CD8-positive, alpha-beta T cell (primary cell): ENCODE measurements at regions of chr11 and their contacts with region 1.

Region 1: DNA sequence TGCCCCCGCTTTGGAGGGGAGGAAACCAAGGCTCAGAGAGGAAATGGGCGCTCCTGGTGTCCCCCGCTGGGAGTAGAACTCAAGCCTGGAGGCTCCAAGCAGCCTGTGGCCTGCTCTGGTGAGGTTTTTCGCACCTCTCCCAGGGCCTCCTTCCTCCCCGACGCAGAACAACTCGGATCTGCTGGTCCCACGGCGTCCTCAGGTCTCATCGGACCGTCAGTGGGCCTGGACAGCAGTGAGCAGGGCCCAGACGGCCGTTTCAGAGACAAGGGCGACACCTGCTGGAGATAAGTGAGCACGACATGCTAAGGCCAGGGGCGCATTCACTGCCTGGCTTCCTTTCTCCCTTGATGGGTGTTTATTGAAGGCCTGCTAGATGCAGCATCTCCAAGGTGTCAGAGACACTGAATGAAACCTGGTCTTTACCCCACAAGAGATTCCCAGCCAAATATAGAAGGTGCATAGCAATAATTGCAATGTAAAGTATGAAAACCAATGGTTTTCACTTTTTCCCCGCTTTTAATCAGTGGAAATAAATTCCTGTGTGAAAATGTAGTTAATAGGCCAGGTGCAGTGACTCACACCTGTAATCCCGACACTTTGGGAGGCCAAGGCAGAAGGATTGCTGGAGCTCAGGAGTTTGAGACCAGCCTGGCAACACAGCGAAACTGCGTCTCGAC is 26.9 kb upstream of the CD82 start:
- DNase-seq: peak; percentile 49 to 81 (median 70)
- ATAC-seq: peak; percentile 80
- H3K4me3 ChIP-seq: no peak overlapping the region
- H3K4me3 Mint-ChIP-seq: no peak overlapping the region
- H3K27ac ChIP-seq: no peak overlapping the region
- H3K27ac Mint-ChIP-seq: no peak overlapping the region
- H3K4me1 ChIP-seq: no peaks in the 10 kb centered on the region
- H3K4me1 Mint-ChIP-seq: no peaks in the 10 kb centered on the region
- H3K27me3 ChIP-seq: no peaks in the 10 kb centered on the region
- H3K27me3 Mint-ChIP-seq: peaks cover 2% of the 10 kb centered on the region
- CTCF ChIP-seq: peak; percentile 99

Region 2: DNA sequence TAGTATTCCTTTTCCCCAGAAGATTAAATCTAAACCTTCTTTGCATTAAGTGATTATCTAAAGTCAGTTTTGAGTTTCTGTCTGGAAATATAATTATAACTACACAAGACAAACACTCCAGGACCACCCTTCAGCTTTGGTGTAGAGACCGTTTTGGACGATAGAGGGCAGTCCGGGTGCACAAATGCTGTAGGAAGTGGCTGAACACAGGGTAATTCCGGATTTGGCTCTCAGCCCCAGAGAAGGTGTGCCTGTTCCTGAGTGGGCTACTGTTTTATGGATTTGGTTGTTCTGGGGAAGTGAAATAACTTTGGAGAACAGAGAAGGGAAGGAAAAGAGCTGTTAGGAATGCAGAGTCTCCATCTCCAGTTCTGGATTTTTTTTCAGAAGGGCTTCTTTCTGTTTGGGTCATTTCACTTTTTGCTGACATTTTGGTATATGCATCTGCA is 428.3 kb before region 1 on chr11:
- CTCF ChIA-PET with region 1: interaction called, 3 read pairs
- POLR2A ChIA-PET with region 1: no interaction called
- intact Hi-C with region 1: loop called in 1 of 2 experiments (anchors 5 kb)
- DNase-seq: peak; percentile 25 to 73 (median 54)
- ATAC-seq: peak; percentile 94
- H3K4me3 ChIP-seq: no peak overlapping the region
- H3K4me3 Mint-ChIP-seq: no peak overlapping the region
- H3K27ac ChIP-seq: no peak overlapping the region
- H3K27ac Mint-ChIP-seq: no peak overlapping the region
- H3K4me1 ChIP-seq: peaks cover 5% of the 10 kb centered on the region
- H3K4me1 Mint-ChIP-seq: peaks cover 8% of the 10 kb centered on the region
- H3K27me3 ChIP-seq: no peaks in the 10 kb centered on the region
- H3K27me3 Mint-ChIP-seq: no peaks in the 10 kb centered on the region
- CTCF ChIP-seq: peak; percentile 81

Region 3: DNA sequence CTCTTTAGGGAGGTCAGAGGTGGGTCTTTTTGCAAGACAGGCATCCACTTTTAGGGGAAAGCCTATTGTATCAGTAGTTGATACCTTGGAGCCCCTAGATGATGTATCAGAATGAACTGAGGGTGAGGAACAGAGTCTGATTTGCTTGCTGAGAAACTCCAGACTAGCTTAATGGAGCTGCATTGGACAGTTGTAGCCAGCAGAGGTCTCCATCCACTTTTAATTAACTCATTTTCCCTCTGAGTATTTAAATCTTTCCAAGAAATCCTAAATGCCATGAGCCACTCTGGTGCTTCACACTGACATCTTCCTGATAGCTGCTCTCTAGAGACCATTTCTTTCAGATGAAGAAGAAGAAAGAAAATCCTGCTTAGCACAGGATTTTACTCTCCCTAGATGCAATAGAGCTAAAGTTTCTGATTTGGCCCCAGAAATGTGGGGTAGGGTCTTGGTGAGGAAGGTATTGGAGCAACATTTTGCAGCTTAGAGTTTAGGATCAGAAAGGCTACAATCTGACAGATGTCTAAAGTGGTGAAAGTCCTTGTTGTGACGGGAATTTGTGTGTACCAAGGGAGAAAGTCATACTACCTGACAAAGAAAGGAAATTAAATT is 405.1 kb before region 1 on chr11:
- CTCF ChIA-PET with region 1: no interaction called
- POLR2A ChIA-PET with region 1: no interaction called
- intact Hi-C with region 1: loop called in 1 of 2 experiments (anchors 2 kb)
- DNase-seq: no peak
- ATAC-seq: no peak
- H3K4me3 ChIP-seq: no peak overlapping the region
- H3K4me3 Mint-ChIP-seq: no peak overlapping the region
- H3K27ac ChIP-seq: no peak overlapping the region
- H3K27ac Mint-ChIP-seq: no peak overlapping the region
- H3K4me1 ChIP-seq: no peaks in the 10 kb centered on the region
- H3K4me1 Mint-ChIP-seq: no peaks in the 10 kb centered on the region
- H3K27me3 ChIP-seq: no peaks in the 10 kb centered on the region
- H3K27me3 Mint-ChIP-seq: no peaks in the 10 kb centered on the region
- CTCF ChIP-seq: no peak

Region 4: DNA sequence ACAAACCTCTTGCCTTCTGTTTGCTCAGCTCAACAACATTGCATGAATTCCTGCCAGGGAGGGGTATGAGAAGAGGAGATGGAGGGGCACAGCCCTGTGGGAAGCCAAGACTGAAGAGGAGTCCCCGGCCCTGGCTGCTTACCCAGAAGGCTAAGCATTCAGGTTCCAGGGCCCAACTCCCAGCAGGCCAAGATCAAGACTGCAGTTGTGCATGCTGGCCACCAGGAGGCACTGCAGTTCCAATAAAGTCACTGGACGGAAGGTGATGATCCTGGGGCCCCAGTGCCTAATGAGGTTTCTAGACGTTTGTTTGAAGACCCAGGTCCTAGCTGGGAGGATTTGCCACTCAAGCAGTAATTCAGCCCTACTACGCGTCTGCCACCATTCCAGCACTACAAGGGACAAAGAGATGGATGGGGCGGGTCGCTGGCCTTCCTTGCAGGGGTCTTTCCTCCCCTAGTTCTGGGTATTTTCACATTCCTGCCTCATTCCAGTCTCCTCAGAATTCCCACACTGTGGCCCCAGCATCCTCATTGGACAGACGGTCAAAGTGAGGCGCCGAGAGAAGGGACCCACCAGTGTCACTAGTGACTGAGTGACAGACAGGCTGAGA is 252.1 kb before region 1 on chr11:
- CTCF ChIA-PET with region 1: interaction called, 24 read pairs
- POLR2A ChIA-PET with region 1: no interaction called
- intact Hi-C with region 1: loop called in 1 of 2 experiments (anchors 1 kb)
- DNase-seq: peak; percentile 8 to 65 (median 52)
- ATAC-seq: peak; percentile 52
- H3K4me3 ChIP-seq: no peak overlapping the region
- H3K4me3 Mint-ChIP-seq: no peak overlapping the region
- H3K27ac ChIP-seq: no peak overlapping the region
- H3K27ac Mint-ChIP-seq: no peak overlapping the region
- H3K4me1 ChIP-seq: no peaks in the 10 kb centered on the region
- H3K4me1 Mint-ChIP-seq: no peaks in the 10 kb centered on the region
- H3K27me3 ChIP-seq: no peaks in the 10 kb centered on the region
- H3K27me3 Mint-ChIP-seq: no peaks in the 10 kb centered on the region
- CTCF ChIP-seq: peak; percentile 93

Region 5: DNA sequence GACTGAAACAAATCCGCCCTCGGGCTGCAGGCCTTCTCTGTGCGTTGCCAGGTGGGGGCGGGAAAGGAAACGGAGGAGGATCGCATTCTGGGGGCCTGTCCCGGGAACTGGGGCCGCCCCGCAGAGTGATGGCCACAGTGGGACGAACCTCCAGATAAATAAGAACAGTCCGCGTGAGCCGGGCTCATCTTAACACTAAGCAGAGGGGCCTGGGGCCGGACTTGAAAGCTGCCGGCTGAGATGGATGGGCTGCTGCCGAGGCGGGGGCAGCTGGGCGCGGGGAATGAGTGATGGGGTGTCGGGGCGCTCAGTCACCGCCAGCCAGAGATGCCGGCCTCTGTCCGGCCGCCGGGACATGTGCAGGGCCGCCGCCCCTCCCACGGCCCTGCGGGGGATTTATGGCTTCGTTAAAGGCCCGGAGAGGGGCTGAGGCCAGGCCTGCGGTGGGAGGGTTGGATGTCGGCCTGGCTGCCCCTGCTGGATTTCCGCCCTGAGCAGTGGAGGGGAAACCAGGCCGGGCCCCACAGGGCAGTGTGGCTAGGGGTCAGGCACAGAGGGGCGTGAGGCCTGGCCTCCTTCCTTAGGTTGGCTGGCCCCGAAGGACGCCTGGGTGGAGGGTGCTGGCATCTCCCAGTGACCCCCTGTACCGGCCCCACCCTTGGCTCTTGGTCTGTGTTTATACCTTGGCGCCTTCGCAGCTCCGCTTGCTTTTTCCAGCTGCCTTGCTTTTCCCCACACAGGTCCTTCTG is 18.4 kb before region 1 on chr11:
- CTCF ChIA-PET with region 1: interaction called, 14 read pairs
- POLR2A ChIA-PET with region 1: no interaction called
- intact Hi-C with region 1: no loop called
- DNase-seq: no peak
- ATAC-seq: no peak
- H3K4me3 ChIP-seq: no peak overlapping the region
- H3K4me3 Mint-ChIP-seq: no peak overlapping the region
- H3K27ac ChIP-seq: no peak overlapping the region
- H3K27ac Mint-ChIP-seq: no peak overlapping the region
- H3K4me1 ChIP-seq: no peaks in the 10 kb centered on the region
- H3K4me1 Mint-ChIP-seq: peaks cover 2% of the 10 kb centered on the region
- H3K27me3 ChIP-seq: no peaks in the 10 kb centered on the region
- H3K27me3 Mint-ChIP-seq: peaks cover 34% of the 10 kb centered on the region
- CTCF ChIP-seq: no peak

Region 6: GRCh38 chr11:44623731-44624491 is 85.4 kb after region 1 on chr11:
- CTCF ChIA-PET with region 1: no interaction called
- POLR2A ChIA-PET with region 1: no interaction called
- intact Hi-C with region 1: no loop called
- DNase-seq: peak in 3 of 9 experiments; percentile 3 to 41 (median 8)
- ATAC-seq: no peak
- H3K4me3 ChIP-seq: no peak overlapping the region
- H3K4me3 Mint-ChIP-seq: no peak overlapping the region
- H3K27ac ChIP-seq: no peak overlapping the region
- H3K27ac Mint-ChIP-seq: peak overlapping the region; percentile 76
- H3K4me1 ChIP-seq: peaks cover 11% of the 10 kb centered on the region
- H3K4me1 Mint-ChIP-seq: peaks cover 9% of the 10 kb centered on the region
- H3K27me3 ChIP-seq: no peaks in the 10 kb centered on the region
- H3K27me3 Mint-ChIP-seq: no peaks in the 10 kb centered on the region
- CTCF ChIP-seq: no peak

Region 7: DNA sequence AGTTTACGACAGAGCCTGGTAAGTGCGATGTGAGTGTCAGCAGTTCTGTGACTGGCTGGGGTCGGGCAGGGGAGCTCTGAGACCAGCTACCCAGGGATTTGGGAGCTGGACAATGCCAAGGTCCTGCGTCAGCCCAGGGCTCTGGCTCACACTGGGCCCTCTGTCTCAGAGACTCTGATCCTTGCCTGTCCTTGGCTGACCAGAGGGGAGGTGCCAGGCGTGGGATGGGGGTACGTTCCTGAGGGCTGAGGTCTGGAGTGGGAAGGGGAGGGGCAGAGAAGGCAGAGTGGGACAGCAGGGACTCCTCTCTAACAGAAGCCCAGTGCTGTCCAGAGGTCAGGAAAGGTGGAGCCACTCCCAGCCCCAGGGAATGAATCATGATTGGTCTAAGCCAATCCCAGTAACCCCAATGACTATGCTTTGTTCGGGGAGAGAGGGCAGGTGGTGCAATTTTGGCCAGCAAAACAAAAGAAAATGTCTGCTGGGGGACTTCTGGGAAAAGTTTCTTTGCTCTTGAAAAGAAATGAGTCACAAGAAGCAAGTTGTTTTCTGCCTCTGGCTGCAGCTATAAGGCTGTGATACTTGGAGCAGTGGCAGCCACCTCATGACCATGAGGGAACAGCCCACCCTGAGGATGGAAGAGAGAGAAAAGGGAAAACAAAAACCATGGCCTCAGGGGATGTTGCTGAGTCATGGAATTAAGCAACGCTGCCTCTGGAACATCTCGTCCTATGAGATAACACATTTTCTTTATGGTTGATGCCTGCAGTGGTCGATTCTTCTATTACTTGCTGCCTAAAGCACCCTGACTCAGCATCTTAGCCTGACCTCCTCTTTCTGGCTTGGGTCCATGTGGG is 1018.6 kb after region 1 on chr11:
- CTCF ChIA-PET with region 1: no interaction called
- POLR2A ChIA-PET with region 1: no interaction called
- intact Hi-C with region 1: no loop called
- DNase-seq: no peak
- ATAC-seq: no peak
- H3K4me3 ChIP-seq: no peak overlapping the region
- H3K4me3 Mint-ChIP-seq: no peak overlapping the region
- H3K27ac ChIP-seq: no peak overlapping the region
- H3K27ac Mint-ChIP-seq: no peak overlapping the region
- H3K4me1 ChIP-seq: no peaks in the 10 kb centered on the region
- H3K4me1 Mint-ChIP-seq: no peaks in the 10 kb centered on the region
- H3K27me3 ChIP-seq: no peaks in the 10 kb centered on the region
- H3K27me3 Mint-ChIP-seq: peaks cover 6% of the 10 kb centered on the region
- CTCF ChIP-seq: no peak